ENCODE measurements at regions of chr9 and their contacts with region 1.

Region 1: DNA sequence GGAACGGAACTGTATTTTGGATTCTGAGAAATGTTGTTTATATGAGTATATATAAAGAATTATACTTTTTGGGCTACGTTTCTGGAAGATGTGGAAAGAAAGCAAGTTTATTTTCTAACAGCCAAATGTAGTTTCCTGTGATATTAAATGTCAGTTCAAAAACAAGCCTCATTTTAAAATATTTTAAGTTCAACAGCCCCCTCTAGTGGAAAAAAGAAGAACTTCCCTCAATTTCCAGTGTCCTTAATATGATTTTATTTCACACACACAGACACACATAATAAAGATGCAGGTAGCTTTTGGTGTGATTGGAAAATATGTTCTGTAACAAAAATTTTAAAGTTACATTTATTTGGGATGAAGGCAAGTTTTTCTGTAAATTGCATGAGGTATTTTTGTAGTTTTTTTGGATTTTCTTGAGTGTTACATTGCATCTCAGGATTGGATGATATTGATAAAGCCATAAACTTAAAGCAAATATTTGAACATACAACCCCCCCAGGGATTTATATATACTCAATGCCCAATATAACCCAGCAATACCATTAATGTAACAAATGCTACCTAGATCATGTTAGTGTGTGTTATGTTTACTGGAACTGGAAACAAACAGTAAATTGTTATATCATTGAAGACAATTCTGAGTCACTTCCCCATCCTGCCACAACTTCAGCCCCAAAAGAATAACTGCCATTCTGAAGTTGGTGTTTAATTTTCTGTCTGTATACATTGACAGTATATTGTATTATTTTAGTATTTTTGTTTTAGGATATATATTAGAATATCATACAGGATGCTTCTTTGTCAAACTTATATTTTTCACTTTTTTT is 54.0 kb downstream of the CCDC171 start:
- DNase-seq: peak; percentile 11
- H3K4me3 Mint-ChIP-seq: no peak overlapping the region
- H3K27ac Mint-ChIP-seq: no peak overlapping the region
- H3K4me1 Mint-ChIP-seq: no peaks in the 10 kb centered on the region
- H3K27me3 Mint-ChIP-seq: no peaks in the 10 kb centered on the region
- CTCF ChIP-seq: peak; percentile 33

Region 2: DNA sequence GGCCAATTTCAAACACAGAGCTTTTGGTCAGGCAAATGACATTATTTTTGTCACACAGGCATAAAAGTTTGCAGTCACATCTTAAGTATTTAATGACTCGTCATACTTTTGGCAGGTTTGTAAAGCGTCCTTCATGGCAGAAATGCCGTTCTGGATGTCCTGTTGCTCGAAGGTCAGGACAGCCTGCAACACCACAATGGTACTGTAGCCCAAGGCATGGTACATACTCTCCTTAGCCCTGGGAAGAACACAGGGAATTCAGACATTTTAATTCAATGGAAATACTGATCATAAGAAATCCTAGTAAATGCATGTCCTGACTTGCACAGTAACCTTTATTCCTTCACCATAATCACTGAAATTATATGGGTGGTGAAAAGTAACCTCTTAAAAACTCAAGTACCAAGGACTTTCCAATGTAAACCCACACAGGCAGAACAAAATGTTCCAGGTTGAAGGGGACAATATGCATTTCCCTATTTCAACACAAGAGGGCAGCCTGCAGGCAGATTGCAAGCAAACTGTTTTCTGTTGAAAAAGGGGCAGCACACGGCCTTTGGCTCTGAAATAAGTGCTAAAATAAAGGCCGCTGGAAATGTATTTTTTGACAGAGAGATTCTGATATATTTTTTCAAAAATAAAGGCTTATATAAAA is 395.6 kb before region 1 on chr9:
- CTCF ChIA-PET with region 1: no interaction called
- intact Hi-C with region 1: loop called (anchors 5 kb)
- DNase-seq: peak; percentile 56
- H3K4me3 Mint-ChIP-seq: no peak overlapping the region
- H3K27ac Mint-ChIP-seq: no peak overlapping the region
- H3K4me1 Mint-ChIP-seq: no peaks in the 10 kb centered on the region
- H3K27me3 Mint-ChIP-seq: no peaks in the 10 kb centered on the region
- CTCF ChIP-seq: peak; percentile 55

Region 3: DNA sequence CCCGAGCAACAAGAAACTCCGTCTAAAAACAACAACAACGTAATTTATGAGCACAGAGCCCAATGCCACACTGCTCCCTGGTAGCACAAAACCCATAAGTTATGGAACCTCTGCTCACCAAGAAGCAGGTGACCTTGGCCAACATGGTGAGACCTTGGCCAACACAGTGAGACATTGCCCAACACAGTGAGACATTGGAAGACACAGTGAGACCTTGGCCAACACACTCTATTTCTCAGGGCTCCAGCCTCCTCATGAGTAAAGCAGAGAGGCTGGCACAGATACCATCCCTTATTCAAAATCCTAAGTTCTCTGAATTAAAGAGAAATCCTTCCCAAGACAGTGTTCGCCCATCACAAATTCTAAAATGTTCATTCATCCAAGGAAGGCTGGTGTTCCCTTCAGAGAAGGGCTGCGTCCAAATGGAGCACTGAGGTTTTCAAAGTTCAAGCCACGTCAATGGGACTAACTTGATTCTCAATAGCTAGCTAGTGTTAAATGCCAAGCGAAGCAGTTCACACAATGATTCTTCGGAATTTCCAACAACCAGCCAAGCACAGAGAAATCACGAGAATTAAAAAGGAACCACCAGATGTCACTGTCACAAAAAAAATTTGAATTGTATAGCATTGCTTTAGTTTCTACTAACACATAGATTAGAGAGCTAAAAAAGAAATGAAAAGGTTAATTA is 329.3 kb before region 1 on chr9:
- CTCF ChIA-PET with region 1: no interaction called
- intact Hi-C with region 1: loop called (anchors 5 kb)
- DNase-seq: no peak
- H3K4me3 Mint-ChIP-seq: no peak overlapping the region
- H3K27ac Mint-ChIP-seq: no peak overlapping the region
- H3K4me1 Mint-ChIP-seq: no peaks in the 10 kb centered on the region
- H3K27me3 Mint-ChIP-seq: no peaks in the 10 kb centered on the region
- CTCF ChIP-seq: no peak

Region 4: DNA sequence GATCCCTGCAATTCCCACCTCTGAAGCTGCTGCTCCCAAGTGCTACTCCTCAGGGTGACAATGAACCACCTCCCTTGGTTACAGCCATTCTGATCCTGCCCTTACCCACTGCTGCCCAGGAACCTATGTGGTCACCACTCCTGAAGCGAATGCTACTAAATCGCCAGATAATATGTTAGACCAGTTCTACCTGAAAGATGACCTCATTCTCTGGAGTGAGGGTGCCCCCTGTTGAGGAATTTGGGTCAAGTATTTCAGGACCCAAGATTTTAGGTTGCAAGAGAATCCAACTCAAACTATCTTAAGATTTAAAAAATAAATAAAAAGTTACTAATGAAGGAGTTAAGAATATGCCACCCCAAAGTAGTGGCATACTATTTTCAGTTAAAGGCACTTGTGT is 190.0 kb before region 1 on chr9:
- CTCF ChIA-PET with region 1: no interaction called
- intact Hi-C with region 1: loop called (anchors 5 kb)
- DNase-seq: peak; percentile 59
- H3K4me3 Mint-ChIP-seq: no peak overlapping the region
- H3K27ac Mint-ChIP-seq: no peak overlapping the region
- H3K4me1 Mint-ChIP-seq: peaks cover 9% of the 10 kb centered on the region
- H3K27me3 Mint-ChIP-seq: no peaks in the 10 kb centered on the region
- CTCF ChIP-seq: peak; percentile 18

Region 5: GRCh38 chr9:15485836-15486666 is 120.8 kb before region 1 on chr9:
- CTCF ChIA-PET with region 1: no interaction called
- intact Hi-C with region 1: loop called (anchors 5 kb)
- DNase-seq: no peak
- H3K4me3 Mint-ChIP-seq: no peak overlapping the region
- H3K27ac Mint-ChIP-seq: no peak overlapping the region
- H3K4me1 Mint-ChIP-seq: no peaks in the 10 kb centered on the region
- H3K27me3 Mint-ChIP-seq: no peaks in the 10 kb centered on the region
- CTCF ChIP-seq: no peak

Region 6: DNA sequence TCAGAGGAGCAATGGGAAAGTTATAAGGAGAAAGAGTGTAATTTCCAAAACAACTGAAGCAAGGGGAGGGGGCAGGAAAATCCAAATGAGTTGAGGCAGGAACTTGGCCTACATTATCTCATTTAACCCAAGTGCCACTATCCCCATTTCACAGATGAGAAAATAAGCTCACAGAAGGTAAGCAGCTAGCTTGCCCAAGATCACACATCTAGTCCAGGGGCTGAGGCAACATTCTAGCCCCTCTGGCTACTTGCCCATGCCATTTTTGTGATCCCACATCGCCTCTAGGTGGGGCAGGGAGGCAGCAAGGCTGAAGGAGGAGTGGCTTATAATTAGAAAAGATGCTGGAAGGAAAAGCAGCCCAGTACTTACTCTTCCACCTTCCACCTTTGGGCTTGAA is 93.5 kb before region 1 on chr9:
- CTCF ChIA-PET with region 1: no interaction called
- intact Hi-C with region 1: loop called (anchors 2 kb)
- DNase-seq: peak; percentile 20
- H3K4me3 Mint-ChIP-seq: no peak overlapping the region
- H3K27ac Mint-ChIP-seq: no peak overlapping the region
- H3K4me1 Mint-ChIP-seq: peaks cover 15% of the 10 kb centered on the region
- H3K27me3 Mint-ChIP-seq: no peaks in the 10 kb centered on the region
- CTCF ChIP-seq: no peak

Measured in Calu3 (cell line).